GM18951 (cell line): ENCODE measurements at regions of chr12 and their contacts with region 1.

Region 1: GRCh38 chr12:22018860-22019259 is 27.2 kb upstream of the CMAS start:
- POLR2A ChIP-seq: no peak

Region 2: GRCh38 chr12:21710948-21711775 is 307.7 kb before region 1 on chr12:
- in situ Hi-C with region 1: loop called (anchors 25 kb)
- POLR2A ChIP-seq: no peak

Region 3: DNA sequence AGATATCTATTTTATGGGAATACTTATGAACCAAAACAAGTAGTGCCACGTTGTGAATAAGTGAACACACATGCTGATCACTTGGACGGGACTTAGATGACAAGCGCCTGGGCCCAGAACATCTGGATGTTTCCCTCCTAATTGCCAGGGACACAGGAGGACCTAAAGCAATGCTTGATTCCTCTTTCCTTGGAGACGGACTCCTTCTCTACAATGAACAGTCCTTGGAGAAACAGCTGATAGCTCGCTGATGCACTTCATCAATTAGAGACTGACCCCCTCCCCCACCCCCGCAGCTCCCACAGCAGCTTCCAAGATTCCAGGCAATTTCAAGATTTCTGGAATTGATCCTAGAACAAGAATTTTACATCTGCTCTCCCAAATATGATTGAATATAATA is 229.3 kb after region 1 on chr12:
- in situ Hi-C with region 1: no loop called
- POLR2A ChIP-seq: no peak